Right ventricle myocardium inferior (tissue), 1 donor: ENCODE measurements at regions of chr1 and their contacts with region 1.

Region 1: DNA sequence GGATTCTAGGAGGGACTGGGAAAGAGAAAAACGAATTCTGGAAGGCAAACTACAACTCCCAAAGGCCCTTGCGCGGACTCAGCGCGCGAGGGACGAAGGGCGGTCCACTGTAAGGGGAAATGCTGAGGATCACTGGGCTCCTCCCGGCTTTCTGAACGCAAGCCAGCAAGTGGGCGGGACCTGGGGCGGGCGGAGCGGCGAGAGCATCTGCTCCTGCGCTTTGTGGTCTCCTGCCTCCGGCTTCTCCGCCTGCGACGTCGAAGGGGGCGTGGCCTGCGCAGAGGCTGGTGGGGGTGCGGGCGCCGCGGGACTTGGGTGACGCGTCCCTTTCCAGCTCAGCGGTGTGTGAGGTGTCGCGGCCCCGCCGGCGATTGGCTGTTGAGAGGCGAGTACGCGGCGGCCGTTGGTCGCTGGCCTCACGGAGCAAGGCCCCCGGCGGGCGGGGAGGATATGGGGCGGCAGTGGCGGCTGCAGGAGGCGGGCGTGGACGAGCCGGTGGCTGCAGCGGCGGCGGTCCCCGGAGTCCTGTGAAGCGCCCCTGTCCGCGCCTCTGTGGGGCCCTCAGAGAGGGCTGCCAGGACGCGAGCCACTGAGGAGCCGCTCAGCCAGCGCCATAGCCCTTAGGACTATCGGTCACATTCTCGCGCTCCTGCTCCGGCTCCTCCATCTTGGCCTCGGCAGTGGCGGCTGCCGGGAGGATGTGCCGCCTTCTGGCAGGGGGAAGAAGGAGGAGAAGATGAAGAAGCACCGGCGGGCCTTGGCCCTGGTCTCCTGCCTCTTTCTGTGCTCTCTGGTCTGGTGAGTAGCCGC is at the start of gene SUCO:
- DNase-seq: peak; percentile 100
- ATAC-seq: peak; percentile 98
- total RNA-seq, gene SUCO: 17.9 TPM

Region 2: DNA sequence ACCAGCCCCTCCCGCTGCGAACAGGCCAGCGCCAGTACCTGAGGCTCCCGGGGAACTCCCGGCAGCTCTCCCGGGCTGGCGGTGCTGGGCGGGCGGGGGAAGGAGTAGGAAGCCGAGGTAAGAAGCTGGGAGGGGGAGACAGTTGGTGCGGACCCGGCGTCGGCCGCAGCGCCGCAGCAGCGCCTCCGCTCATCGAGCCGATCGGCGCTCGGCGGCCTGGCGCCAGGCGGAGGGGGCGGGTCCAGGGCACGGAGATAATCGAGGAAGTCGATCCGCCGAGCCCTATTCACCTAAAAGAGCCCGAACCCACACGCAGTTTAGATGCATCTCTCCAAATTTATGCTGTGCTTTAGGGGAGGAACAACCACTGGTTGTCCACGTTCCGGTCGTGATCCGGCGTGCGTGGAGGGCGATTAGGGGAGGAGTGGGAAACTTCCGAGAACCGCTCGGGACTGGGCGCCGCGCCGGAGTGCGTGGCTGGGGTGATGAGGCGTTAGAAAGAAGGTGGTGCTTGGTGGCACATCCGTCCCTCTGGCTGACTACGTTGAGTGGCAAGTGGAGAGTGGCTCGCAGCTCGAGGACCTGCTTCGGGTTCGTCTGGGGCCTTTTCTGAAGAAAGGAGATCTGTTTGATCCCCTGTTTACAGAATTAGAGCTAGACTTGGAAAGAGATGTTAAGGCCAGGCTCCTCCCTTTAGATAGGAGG is 790.9 kb before region 1 on chr1 and contains the start of gene VAMP4:
- intact Hi-C with region 1: loop called (anchors 1 kb)
- DNase-seq: peak; percentile 95
- ATAC-seq: peak; percentile 91
- total RNA-seq, gene VAMP4: 11.4 TPM

Region 3: GRCh38 chr1:172449585-172450534 is 83.0 kb before region 1 on chr1:
- intact Hi-C with region 1: loop called (anchors 1 kb)
- DNase-seq: peak; percentile 78
- ATAC-seq: peak; percentile 83

Region 4: GRCh38 chr1:172466795-172467407 is 66.0 kb before region 1 on chr1:
- intact Hi-C with region 1: loop called (anchors 5 kb)
- DNase-seq: no peak
- ATAC-seq: no peak

Region 5: GRCh38 chr1:172547071-172547470 is 14.2 kb after region 1 on chr1:
- intact Hi-C with region 1: no loop called
- DNase-seq: no peak
- ATAC-seq: no peak

Region 6: GRCh38 chr1:173476664-173477285 is 943.9 kb after region 1 on chr1:
- intact Hi-C with region 1: loop called (anchors 10 kb)
- DNase-seq: peak; percentile 97
- ATAC-seq: peak; percentile 93

Region 7: GRCh38 chr1:174022080-174022975 is 1489.4 kb after region 1 on chr1 and contains the start of gene RC3H1:
- intact Hi-C with region 1: loop called (anchors 10 kb)
- DNase-seq: peak; percentile 97
- ATAC-seq: peak; percentile 98
- total RNA-seq, gene RC3H1: 20.2 TPM